ENCODE measurements at regions of chr2 and their contacts with region 1.

Region 1: DNA sequence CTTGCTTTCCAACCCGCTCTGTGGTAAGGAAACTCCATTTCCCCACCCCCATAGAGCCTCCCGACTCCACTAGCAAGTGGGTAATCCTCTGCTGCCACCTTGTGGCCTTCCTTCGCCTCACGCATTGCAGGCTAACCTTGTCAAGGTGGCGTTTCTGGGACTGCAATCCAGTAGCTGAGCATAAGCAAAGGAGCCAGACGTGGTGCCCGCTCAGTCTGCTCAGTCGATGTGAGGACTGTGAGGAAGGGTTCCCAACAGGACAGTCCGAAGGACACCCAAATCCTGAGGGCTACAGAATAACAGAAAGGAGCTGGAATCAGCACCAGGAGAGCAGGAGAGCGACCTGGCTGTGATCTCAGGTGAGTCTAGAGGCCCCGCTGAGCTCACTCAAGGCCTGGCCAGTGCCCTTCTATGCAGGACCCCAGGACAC is 144.2 kb downstream of the SUCLG1 start:
- DNase-seq: peak; percentile 83
- H3K4me3 Mint-ChIP-seq: no peak overlapping the region
- H3K27ac Mint-ChIP-seq: no peak overlapping the region
- H3K4me1 Mint-ChIP-seq: peaks cover 4% of the 10 kb centered on the region
- H3K27me3 Mint-ChIP-seq: peaks cover 5% of the 10 kb centered on the region

Region 2: GRCh38 chr2:84022810-84023431 is 292.0 kb before region 1 on chr2:
- CTCF ChIA-PET with region 1: interaction called, 23 read pairs
- POLR2A ChIA-PET with region 1: no interaction called
- intact Hi-C with region 1: no loop called
- DNase-seq: no peak
- H3K4me3 Mint-ChIP-seq: no peak overlapping the region
- H3K27ac Mint-ChIP-seq: no peak overlapping the region
- H3K4me1 Mint-ChIP-seq: no peaks in the 10 kb centered on the region
- H3K27me3 Mint-ChIP-seq: peaks cover 2% of the 10 kb centered on the region

Region 3: GRCh38 chr2:84302513-84303412 is 12.2 kb before region 1 on chr2:
- CTCF ChIA-PET with region 1: interaction called, 39 read pairs
- POLR2A ChIA-PET with region 1: no interaction called
- intact Hi-C with region 1: no loop called
- DNase-seq: peak; percentile 49
- H3K4me3 Mint-ChIP-seq: no peak overlapping the region
- H3K27ac Mint-ChIP-seq: no peak overlapping the region
- H3K4me1 Mint-ChIP-seq: no peaks in the 10 kb centered on the region
- H3K27me3 Mint-ChIP-seq: peaks cover 5% of the 10 kb centered on the region

Region 4: GRCh38 chr2:84424152-84424551 is 109.2 kb after region 1 on chr2:
- CTCF ChIA-PET with region 1: no interaction called
- POLR2A ChIA-PET with region 1: no interaction called
- intact Hi-C with region 1: loop called (anchors 5 kb)
- DNase-seq: no peak
- H3K4me3 Mint-ChIP-seq: no peak overlapping the region
- H3K27ac Mint-ChIP-seq: no peak overlapping the region
- H3K4me1 Mint-ChIP-seq: no peaks in the 10 kb centered on the region
- H3K27me3 Mint-ChIP-seq: no peaks in the 10 kb centered on the region

Region 5: GRCh38 chr2:84653300-84653699 is 338.4 kb after region 1 on chr2:
- CTCF ChIA-PET with region 1: no interaction called
- POLR2A ChIA-PET with region 1: no interaction called
- intact Hi-C with region 1: no loop called
- DNase-seq: no peak
- H3K4me3 Mint-ChIP-seq: no peak overlapping the region
- H3K27ac Mint-ChIP-seq: no peak overlapping the region
- H3K4me1 Mint-ChIP-seq: peaks cover 54% of the 10 kb centered on the region
- H3K27me3 Mint-ChIP-seq: no peaks in the 10 kb centered on the region